ENCODE measurements at regions of chr12 and their contacts with region 1.

Region 1: GRCh38 chr12:107131832-107132616 is 38.7 kb upstream of the CRY1 start:
- H3K4me3 ChIP-seq: no peak overlapping the region
- H3K27ac ChIP-seq: no peak overlapping the region
- H3K4me1 ChIP-seq: no peaks in the 10 kb centered on the region
- CTCF ChIP-seq: peak; percentile 63; the same call in 1 of the 2 replicates

Region 2: GRCh38 chr12:107109741-107110719 is 22.0 kb before region 1 on chr12:
- CTCF ChIA-PET with region 1: interaction called, 10 read pairs
- POLR2A ChIA-PET with region 1: no interaction called
- H3K4me3 ChIP-seq: no peak overlapping the region
- H3K27ac ChIP-seq: no peak overlapping the region
- H3K4me1 ChIP-seq: no peaks in the 10 kb centered on the region
- CTCF ChIP-seq: no peak

Region 3: DNA sequence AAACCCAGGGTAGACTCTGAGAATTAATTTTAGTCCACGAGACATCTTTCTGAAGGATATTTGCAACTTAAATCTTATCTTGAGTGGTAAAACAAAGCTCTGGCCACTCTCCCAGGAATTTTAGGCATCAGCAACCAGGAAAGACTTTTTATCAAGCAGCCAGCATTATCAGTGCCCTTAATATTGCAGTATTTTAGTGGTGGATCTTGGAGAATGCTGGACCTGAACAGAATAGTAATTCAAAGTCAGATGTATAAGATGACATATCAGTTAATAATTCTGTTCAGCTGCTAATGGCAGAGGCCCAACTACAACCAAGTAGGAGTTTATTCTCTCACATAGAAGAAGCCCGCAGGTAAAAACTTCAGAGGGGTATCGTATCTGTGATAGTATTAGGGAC is 20.3 kb after region 1 on chr12:
- CTCF ChIA-PET with region 1: interaction called, 11 read pairs
- POLR2A ChIA-PET with region 1: no interaction called
- H3K4me3 ChIP-seq: no peak overlapping the region
- H3K27ac ChIP-seq: no peak overlapping the region
- H3K4me1 ChIP-seq: no peaks in the 10 kb centered on the region
- CTCF ChIP-seq: no peak

Region 4: GRCh38 chr12:107402041-107403022 is 270.3 kb after region 1 on chr12:
- CTCF ChIA-PET with region 1: interaction called, 79 read pairs
- POLR2A ChIA-PET with region 1: no interaction called
- H3K4me3 ChIP-seq: no peak overlapping the region
- H3K27ac ChIP-seq: no peak overlapping the region
- H3K4me1 ChIP-seq: no peaks in the 10 kb centered on the region
- CTCF ChIP-seq: peak; percentile 61

Region 5: DNA sequence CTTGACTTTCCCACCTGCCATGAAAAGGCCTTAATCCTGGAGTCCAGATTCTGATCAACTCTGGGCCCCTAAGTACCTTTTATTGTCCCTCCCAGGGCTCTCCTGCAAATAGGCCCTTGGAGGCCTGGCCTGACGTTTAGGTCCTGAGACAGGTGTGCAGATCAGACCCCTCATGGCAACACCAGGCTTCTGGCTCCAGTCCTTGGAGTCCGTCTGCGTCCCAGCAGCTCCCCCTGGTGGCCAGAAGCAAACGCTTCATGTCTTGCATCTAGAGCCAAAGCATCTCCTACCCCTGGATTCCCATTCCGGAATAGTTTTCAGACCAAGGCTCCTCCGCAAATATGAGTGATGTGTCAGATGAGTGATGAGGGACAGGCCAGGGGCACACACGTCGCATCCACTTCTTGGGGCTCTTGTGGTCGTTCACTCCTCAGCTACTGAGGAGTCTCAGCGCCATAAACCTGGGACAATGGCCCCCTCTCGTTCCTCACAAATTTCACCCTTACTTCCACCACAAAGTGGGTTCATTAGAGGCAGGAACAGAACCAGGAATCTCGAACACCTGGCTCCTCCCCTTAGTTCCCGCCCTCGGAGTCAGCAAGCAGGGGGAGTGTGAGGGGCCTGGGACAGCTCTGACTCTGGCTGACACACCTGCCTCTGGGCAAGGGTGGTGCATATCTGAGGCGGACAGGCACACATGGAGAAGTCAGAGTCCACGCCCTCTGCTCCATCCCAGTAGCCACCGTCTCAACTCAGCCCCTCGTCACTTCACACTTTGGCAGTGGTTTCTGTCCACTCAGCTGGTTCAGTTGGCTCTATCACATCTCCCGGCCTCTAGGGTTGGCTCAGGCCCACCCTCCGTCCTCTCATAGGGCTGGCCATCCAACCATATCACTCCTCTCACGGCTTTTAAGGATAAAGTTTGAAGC is 475.7 kb after region 1 on chr12:
- CTCF ChIA-PET with region 1: interaction called, 290 read pairs
- POLR2A ChIA-PET with region 1: no interaction called
- H3K4me3 ChIP-seq: no peak overlapping the region
- H3K27ac ChIP-seq: no peak overlapping the region
- H3K4me1 ChIP-seq: no peaks in the 10 kb centered on the region
- CTCF ChIP-seq: peak; percentile 78

Measured in HEK293 (cell line).